A673 (cell line): ENCODE measurements at regions of chr22 and their contacts with region 1.

Region 1: GRCh38 chr22:25122136-25122764 is 77.4 kb upstream of the CRYBB3 start:
- DNase-seq: no peak
- H3K4me3 ChIP-seq: no peak overlapping the region
- H3K27ac ChIP-seq: no peak overlapping the region
- H3K4me1 ChIP-seq: no peaks in the 10 kb centered on the region
- H3K27me3 ChIP-seq: no peaks in the 10 kb centered on the region
- CTCF ChIP-seq: no peak

Region 2: GRCh38 chr22:25718135-25718840 is 596.0 kb after region 1 on chr22:
- CTCF ChIA-PET with region 1: no interaction called
- POLR2A ChIA-PET with region 1: interaction called, 15 read pairs
- intact Hi-C with region 1: no loop called
- DNase-seq: no peak
- H3K4me3 ChIP-seq: no peak overlapping the region
- H3K27ac ChIP-seq: no peak overlapping the region
- H3K4me1 ChIP-seq: no peaks in the 10 kb centered on the region
- H3K27me3 ChIP-seq: no peaks in the 10 kb centered on the region
- CTCF ChIP-seq: no peak